Activated CD4-positive, alpha-beta memory T cell treated with anti-CD3 and anti-CD28 coated beads for 36 hours (primary cell): ENCODE measurements at regions of chr10 and their contacts with region 1.

Region 1: DNA sequence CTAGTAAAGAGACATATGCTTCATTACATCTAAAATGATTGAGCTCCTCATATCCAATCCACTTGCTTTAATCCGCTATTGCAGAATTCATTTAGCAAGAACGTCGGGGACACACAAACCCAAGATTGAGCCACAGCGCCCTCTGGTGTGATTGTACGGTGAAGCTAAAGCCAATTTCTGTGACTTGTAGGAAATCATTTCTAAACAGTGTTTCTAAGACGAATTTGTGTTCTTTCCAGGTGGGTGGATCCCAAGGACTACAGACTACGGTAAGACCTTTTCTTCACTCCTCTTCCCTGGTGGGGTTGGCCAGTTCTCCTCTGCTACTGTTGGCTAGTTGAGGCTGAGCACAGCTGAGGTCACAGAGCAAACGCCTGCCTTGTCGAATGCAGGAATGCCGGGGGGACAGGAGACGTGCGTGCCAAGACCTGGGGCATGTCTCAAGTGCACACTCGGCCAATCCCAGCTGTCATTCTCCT is 5.2 kb downstream of the DMBT1 start:
- DNase-seq: peak; percentile 83
- H3K4me3 Mint-ChIP-seq: no peak overlapping the region
- H3K27ac Mint-ChIP-seq: no peak overlapping the region
- H3K4me1 Mint-ChIP-seq: peaks cover 10% of the 10 kb centered on the region
- H3K27me3 Mint-ChIP-seq: peaks cover 6% of the 10 kb centered on the region

Region 2: GRCh38 chr10:122298598-122299301 is 267.0 kb before region 1 on chr10:
- CTCF ChIA-PET with region 1: interaction called, 73 read pairs
- POLR2A ChIA-PET with region 1: no interaction called
- intact Hi-C with region 1: loop called (anchors 1 kb)
- DNase-seq: peak; percentile 79
- H3K4me3 Mint-ChIP-seq: no peak overlapping the region
- H3K27ac Mint-ChIP-seq: no peak overlapping the region
- H3K4me1 Mint-ChIP-seq: peaks cover 7% of the 10 kb centered on the region
- H3K27me3 Mint-ChIP-seq: no peaks in the 10 kb centered on the region

Region 3: DNA sequence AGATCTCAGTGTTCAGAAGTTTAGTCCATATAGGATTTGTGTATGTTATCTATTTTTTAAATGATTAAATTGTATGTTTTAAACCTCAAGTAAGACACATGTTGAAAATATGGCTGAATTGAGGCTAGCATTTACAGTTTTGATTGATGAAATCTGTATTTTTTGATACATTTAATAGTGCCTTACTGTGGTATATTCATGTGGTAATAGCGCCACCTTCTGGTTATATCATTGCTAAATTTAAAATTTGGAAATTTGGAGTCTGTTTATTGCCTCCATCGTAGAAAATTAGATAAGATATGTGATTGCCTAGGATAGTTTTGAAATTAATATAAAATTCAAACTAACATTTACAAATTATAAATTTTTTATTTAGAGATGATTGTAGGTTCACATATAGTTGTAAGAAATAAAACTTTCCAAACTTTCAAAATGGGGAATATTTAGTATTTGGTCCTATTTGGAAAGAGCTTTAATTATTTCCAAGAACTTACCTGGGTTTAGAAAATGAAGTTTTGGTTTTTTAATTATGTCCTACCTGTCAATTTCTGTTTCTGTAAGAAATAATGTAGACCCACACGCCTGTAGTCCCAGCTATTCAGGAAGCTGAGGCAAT is 130.4 kb before region 1 on chr10:
- CTCF ChIA-PET with region 1: interaction called, 36 read pairs
- POLR2A ChIA-PET with region 1: no interaction called
- intact Hi-C with region 1: loop called (anchors 1 kb)
- DNase-seq: no peak
- H3K4me3 Mint-ChIP-seq: no peak overlapping the region
- H3K27ac Mint-ChIP-seq: no peak overlapping the region
- H3K4me1 Mint-ChIP-seq: peaks cover 2% of the 10 kb centered on the region
- H3K27me3 Mint-ChIP-seq: no peaks in the 10 kb centered on the region

Region 4: GRCh38 chr10:122510326-122510725 is 55.4 kb before region 1 on chr10:
- CTCF ChIA-PET with region 1: interaction called, 31 read pairs
- POLR2A ChIA-PET with region 1: no interaction called
- intact Hi-C with region 1: no loop called
- DNase-seq: no peak
- H3K4me3 Mint-ChIP-seq: no peak overlapping the region
- H3K27ac Mint-ChIP-seq: no peak overlapping the region
- H3K4me1 Mint-ChIP-seq: peaks cover 16% of the 10 kb centered on the region
- H3K27me3 Mint-ChIP-seq: no peaks in the 10 kb centered on the region

Region 5: DNA sequence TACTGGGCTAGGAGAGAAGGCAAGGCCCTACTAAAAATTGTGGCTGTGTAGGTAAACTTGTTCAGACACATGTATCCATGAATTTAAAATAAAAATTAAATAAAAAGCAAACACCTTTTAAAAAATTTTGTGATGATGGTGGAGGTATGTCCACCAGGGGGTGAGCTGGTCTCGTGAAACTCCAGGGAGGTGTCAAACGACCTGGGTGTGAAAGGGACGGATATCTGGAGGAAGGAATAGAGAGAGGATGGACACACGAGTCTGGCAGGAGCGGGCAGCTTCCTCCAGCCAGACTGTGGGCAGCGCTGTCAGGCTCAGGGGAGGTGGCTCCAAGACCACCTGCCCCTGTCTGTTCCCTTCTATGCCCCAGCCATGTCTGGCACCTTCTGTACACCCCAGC is 40.0 kb before region 1 on chr10:
- CTCF ChIA-PET with region 1: interaction called, 47 read pairs
- POLR2A ChIA-PET with region 1: no interaction called
- intact Hi-C with region 1: loop called (anchors 1 kb)
- DNase-seq: peak; percentile 31
- H3K4me3 Mint-ChIP-seq: no peak overlapping the region
- H3K27ac Mint-ChIP-seq: no peak overlapping the region
- H3K4me1 Mint-ChIP-seq: no peaks in the 10 kb centered on the region
- H3K27me3 Mint-ChIP-seq: no peaks in the 10 kb centered on the region

Region 6: GRCh38 chr10:122551450-122551849 is 14.3 kb before region 1 on chr10:
- CTCF ChIA-PET with region 1: interaction called, 18 read pairs
- POLR2A ChIA-PET with region 1: no interaction called
- intact Hi-C with region 1: no loop called
- DNase-seq: peak; percentile 79
- H3K4me3 Mint-ChIP-seq: no peak overlapping the region
- H3K27ac Mint-ChIP-seq: peak overlapping the region; percentile 36
- H3K4me1 Mint-ChIP-seq: peaks cover 20% of the 10 kb centered on the region
- H3K27me3 Mint-ChIP-seq: no peaks in the 10 kb centered on the region

Region 7: GRCh38 chr10:122703439-122704118 is 137.8 kb after region 1 on chr10:
- CTCF ChIA-PET with region 1: interaction called, 4 read pairs
- POLR2A ChIA-PET with region 1: no interaction called
- intact Hi-C with region 1: loop called (anchors 1 kb)
- DNase-seq: peak; percentile 66
- H3K4me3 Mint-ChIP-seq: no peak overlapping the region
- H3K27ac Mint-ChIP-seq: no peak overlapping the region
- H3K4me1 Mint-ChIP-seq: peaks cover 8% of the 10 kb centered on the region
- H3K27me3 Mint-ChIP-seq: no peaks in the 10 kb centered on the region

Region 8: GRCh38 chr10:123019941-123020703 is 454.4 kb after region 1 on chr10:
- CTCF ChIA-PET with region 1: no interaction called
- POLR2A ChIA-PET with region 1: no interaction called
- intact Hi-C with region 1: no loop called
- DNase-seq: no peak
- H3K4me3 Mint-ChIP-seq: no peak overlapping the region
- H3K27ac Mint-ChIP-seq: no peak overlapping the region
- H3K4me1 Mint-ChIP-seq: no peaks in the 10 kb centered on the region
- H3K27me3 Mint-ChIP-seq: no peaks in the 10 kb centered on the region